ENCODE measurements at regions of chr11 and their contacts with region 1.

Region 1: GRCh38 chr11:120511116-120511819 is at the start of gene GRIK4:
- DNase-seq: peak; percentile 84
- H3K4me3 Mint-ChIP-seq: peak within 1 kb of the TSS; percentile 22
- H3K27ac Mint-ChIP-seq: no peak within 1 kb of the TSS
- H3K4me1 Mint-ChIP-seq: no peaks in the 10 kb centered on the region
- H3K27me3 Mint-ChIP-seq: peaks cover 94% of the 10 kb centered on the region
- CTCF ChIP-seq: peak; percentile 72
- total RNA-seq, gene GRIK4: 0.12 TPM in 1 of 2 replicates, not detected in the other

Region 2: DNA sequence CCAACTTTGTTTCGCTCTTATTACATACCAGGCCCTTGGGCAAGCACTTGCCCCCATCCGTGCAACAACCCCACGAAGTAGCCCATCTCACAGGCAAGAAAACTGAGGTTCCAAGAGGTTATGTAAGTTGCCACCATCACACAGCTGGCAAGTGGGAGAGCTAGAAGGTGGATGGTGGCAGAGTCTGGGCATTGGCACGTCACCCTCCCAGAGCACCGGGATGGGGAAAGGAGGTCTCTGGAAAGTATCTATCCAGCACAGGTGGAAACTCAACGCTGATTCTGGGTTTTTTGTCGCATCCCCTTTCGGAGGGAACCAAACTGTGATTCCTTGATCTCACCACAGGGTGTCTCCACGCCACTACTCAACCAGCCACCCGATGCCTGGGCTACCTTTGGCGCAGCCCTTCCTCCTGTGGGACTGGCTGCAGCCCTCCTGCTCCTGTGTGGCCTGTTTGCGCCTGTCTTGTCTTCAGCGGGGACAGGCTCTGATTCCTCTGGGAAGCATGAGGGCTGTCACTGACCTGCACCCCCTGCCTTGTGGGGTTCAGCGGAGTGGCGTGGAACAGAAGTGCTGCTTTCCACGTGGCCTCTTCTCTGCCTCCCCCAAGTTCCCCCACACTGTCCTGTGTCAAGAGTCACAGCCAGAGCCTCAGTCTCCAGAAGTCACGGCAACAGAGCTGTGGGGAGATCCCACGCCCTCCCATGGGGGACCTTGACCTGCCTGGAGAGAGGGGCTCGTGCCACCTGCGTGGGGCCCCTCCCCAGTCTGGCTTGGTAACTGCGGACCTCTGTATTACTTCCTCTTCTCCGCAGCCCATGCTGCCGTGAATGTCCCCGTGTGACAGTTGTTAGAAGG is 339.0 kb before region 1 on chr11:
- CTCF ChIA-PET with region 1: no interaction called
- intact Hi-C with region 1: no loop called
- DNase-seq: peak; percentile 64
- H3K4me3 Mint-ChIP-seq: no peak overlapping the region
- H3K27ac Mint-ChIP-seq: no peak overlapping the region
- H3K4me1 Mint-ChIP-seq: no peaks in the 10 kb centered on the region
- H3K27me3 Mint-ChIP-seq: peaks cover 81% of the 10 kb centered on the region
- CTCF ChIP-seq: peak; percentile 49

Region 3: DNA sequence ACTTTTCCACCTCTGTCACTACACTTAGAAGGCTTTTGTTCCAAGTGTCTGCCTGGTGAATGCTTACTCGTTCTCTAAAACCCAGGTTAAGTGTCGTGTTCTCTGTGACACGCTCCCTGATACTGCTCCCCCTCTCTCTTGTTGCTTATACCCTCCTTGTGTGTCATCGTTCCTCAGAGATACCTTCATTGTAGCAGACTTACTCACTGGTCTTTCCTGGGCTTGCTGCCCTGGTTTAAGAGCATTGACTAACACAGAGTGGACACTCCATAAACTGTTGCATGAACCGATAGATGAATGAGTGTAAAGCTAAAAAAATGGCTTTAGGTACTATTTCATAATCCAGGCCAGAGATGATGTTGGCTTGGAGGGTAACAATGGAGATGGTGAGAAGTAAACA is 171.6 kb after region 1 on chr11:
- CTCF ChIA-PET with region 1: interaction called, 20 read pairs
- intact Hi-C with region 1: loop called (anchors 1 kb)
- DNase-seq: no peak
- H3K4me3 Mint-ChIP-seq: no peak overlapping the region
- H3K27ac Mint-ChIP-seq: no peak overlapping the region
- H3K4me1 Mint-ChIP-seq: no peaks in the 10 kb centered on the region
- H3K27me3 Mint-ChIP-seq: peaks cover 89% of the 10 kb centered on the region
- CTCF ChIP-seq: no peak

Region 4: GRCh38 chr11:120801801-120802689 is 290.8 kb after region 1 on chr11:
- CTCF ChIA-PET with region 1: no interaction called
- intact Hi-C with region 1: loop called (anchors 2 kb)
- DNase-seq: peak; percentile 63
- H3K4me3 Mint-ChIP-seq: no peak overlapping the region
- H3K27ac Mint-ChIP-seq: no peak overlapping the region
- H3K4me1 Mint-ChIP-seq: peaks cover 4% of the 10 kb centered on the region
- H3K27me3 Mint-ChIP-seq: peaks cover 51% of the 10 kb centered on the region
- CTCF ChIP-seq: peak; percentile 57

Region 5: GRCh38 chr11:121112498-121113455 is 601.5 kb after region 1 on chr11:
- CTCF ChIA-PET with region 1: no interaction called
- intact Hi-C with region 1: loop called (anchors 2 kb)
- DNase-seq: peak; percentile 42
- H3K4me3 Mint-ChIP-seq: no peak overlapping the region
- H3K27ac Mint-ChIP-seq: no peak overlapping the region
- H3K4me1 Mint-ChIP-seq: no peaks in the 10 kb centered on the region
- H3K27me3 Mint-ChIP-seq: peaks cover 61% of the 10 kb centered on the region
- CTCF ChIP-seq: no peak

Region 6: DNA sequence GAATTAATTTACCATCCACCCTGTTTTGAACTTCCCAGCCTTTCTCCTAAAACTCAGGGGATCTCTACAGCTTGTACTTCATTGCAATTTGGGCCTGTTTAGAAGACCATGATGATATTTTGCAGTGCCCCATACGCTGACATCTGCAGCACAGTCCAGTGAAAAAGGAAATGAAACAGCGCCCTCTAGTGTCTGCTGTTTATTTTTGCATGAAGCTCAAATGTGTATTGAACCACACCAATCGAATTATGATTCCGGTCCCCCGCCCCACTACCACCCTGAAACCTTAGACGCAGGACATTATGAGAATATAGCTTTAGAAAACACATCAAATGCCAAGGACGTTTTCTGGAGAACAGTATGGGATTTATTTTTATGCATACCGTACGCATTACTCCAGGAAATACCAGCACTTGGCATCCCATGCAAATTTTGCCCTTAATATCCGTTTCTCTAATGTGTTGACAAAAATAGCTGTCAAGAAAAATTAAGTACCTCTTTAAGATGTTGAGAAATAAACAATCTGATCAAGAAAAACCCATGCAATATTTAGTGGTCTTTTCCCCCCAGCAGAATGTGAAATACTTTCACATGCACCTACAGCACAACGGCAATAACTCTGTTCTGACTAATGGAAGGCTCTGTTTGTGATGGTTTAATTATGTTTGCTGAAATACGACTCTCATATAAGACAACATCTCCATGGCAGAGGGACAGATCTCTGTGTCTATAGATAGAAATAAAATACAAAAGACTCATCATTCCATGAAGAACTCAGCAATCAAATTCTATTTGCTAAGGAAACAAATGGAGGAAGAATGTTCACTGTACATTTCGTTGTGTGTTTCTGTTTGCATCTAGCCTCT is 683.7 kb after region 1 on chr11:
- CTCF ChIA-PET with region 1: no interaction called
- intact Hi-C with region 1: loop called (anchors 5 kb)
- DNase-seq: peak; percentile 36
- H3K4me3 Mint-ChIP-seq: no peak overlapping the region
- H3K27ac Mint-ChIP-seq: no peak overlapping the region
- H3K4me1 Mint-ChIP-seq: no peaks in the 10 kb centered on the region
- H3K27me3 Mint-ChIP-seq: peaks cover 16% of the 10 kb centered on the region
- CTCF ChIP-seq: peak; percentile 57